OCI-LY7 (cell line): ENCODE measurements at regions of chr1 and their contacts with region 1.

Region 1: DNA sequence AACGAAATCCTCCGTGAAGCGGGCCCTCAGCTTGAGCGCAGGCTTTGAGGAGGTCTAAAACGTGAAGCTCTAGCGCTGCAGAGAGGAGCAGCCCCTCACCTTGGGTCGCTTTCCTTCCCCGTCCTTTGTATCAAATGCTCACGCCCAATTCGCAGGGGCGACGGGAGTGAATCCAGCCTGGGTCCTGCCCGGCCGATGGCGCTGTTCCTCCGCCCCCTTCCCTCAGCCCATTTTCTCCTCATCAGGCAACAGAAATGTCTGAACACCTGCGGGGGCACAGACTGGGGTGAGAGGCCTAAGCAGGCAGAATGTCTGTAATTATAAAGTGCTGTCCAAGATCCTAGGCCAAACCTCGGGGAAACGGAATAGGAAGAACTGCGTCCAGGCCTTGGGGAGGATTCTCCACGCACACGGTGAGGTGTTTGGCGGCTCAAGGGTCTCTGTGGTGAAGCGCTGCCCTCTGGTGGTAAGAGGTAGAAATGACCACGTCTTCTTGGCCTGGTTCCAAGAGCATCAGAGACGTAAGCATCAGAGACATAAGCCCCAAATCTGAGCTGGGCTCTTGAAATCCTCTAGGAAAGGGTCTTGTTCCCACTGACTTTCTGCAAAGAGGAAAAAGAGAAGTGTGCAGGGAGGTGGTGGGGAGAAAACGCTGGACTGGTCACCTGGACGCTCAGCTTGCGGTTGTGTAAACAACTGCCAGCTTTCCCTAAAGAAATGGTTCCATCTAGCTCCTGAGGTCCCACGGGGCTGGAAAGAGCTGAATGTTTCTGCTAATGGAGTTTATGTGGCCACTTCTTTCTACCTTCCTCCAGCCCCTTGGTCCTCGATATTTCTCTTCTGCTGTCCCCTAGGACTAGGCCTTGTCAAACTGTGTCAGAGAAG is 92.1 kb upstream of the CD53 start:
- DNase-seq: peak; percentile 81
- H3K4me3 ChIP-seq: no peak overlapping the region
- H3K27ac ChIP-seq: no peak overlapping the region
- H3K4me1 ChIP-seq: peaks cover 4% of the 10 kb centered on the region
- CTCF ChIP-seq: peak; percentile 92

Region 2: DNA sequence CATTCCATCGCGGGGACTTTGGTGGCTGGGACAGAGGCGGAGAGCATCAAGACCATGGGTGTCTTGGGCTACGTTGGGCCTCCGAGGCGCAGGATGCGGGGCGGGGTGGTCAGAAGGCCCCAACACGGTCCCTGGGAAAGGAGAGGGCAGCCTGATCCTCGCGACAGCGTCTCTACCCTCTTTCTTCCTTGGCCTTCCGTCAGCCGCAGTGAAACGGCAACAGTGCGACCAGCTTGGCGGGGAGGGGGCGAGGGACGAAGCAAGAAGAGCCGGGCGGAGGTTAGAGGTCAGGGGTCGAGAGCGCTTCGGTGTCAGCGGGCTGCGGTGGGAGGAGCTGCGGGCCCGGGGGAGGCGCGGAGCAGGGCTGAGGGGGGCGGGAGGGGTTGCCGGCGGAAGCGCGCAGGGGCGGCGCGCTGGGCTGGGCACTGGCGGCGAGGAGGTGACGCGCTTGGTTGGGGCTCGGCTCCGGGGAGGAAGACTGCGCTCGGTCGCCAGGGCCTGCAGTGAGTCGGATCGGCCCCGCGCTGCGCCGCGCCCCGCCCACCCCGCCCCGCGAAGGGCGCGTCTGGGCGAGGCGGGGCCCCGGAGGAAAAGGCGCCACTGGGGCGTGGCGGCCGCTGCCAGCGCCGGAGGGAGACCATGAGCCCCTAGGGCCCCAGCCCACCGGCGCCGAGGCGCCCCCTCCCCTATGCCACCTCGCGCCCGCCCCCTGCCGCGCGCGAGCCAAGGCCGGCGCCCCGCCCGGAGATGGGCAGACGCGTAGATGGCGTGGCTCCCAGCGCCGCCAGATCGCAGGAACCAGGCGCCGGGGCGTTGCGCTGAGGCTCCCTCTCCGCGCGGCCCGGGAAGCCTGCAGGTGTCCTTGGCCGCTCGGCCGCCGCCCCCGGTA is 570.9 kb before region 1 on chr1 and contains the start of gene KCNC4:
- CTCF ChIA-PET with region 1: interaction called, 3 read pairs
- POLR2A ChIA-PET with region 1: no interaction called
- intact Hi-C with region 1: loop called (anchors 10 kb)
- DNase-seq: peak; percentile 89
- H3K4me3 ChIP-seq: peak within 1 kb of the TSS; percentile 71
- H3K27ac ChIP-seq: peak within 1 kb of the TSS; percentile 33
- H3K4me1 ChIP-seq: peaks cover 31% of the 10 kb centered on the region
- CTCF ChIP-seq: no peak
- total RNA-seq, gene KCNC4: 3.9 and 5.6 TPM in 2 replicates

Region 3: DNA sequence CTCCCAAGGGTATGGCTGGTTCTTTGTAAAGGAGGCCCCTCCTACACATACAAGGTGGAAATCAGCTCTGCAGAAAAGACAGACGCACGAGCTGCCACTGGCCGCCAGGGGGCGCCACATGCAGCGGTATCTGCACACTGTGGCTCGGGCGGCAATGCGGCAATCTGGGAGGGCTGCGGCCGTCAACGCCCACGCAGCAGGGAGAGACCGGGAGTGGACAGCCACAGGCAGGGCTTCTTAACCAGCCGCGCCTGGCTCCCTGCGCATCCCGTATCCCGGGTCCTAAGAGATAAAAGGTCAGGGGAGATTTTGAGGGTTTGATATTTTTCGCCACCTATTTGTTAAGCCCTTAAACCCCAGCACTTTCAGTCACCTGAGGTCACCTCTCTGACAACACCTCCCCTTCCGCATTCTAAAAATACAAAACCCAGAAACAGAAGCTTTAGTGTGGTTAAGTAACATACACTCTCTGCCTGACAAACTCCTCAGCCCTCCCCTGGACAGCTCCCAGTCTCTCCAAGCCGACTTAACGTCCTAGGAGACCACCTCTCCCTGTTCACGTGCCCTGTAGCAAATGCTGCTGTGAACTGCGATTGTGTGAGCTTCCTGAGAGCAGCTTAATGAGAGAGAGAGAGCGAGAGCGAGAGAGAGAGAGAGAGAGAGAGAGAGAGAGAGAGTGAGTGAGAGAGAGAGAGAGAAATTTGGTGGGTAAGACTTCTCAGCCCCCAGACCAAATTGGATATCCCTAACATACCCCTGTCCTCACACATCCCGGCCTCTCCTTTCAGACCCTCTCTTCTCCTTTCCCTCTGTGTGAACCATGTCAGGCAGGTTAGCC is 161.2 kb before region 1 on chr1:
- CTCF ChIA-PET with region 1: interaction called, 7 read pairs
- POLR2A ChIA-PET with region 1: no interaction called
- intact Hi-C with region 1: loop called (anchors 1 kb)
- DNase-seq: peak; percentile 90
- H3K4me3 ChIP-seq: peak overlapping the region; percentile 64
- H3K27ac ChIP-seq: no peak overlapping the region
- H3K4me1 ChIP-seq: peaks cover 29% of the 10 kb centered on the region
- CTCF ChIP-seq: peak; percentile 98

Region 4: GRCh38 chr1:110674337-110675059 is 106.3 kb before region 1 on chr1 and contains the start of gene KCNA3:
- CTCF ChIA-PET with region 1: no interaction called
- POLR2A ChIA-PET with region 1: interaction called, 4 read pairs
- intact Hi-C with region 1: loop called (anchors 5 kb)
- DNase-seq: peak; percentile 79
- H3K4me3 ChIP-seq: peak within 1 kb of the TSS; percentile 84
- H3K27ac ChIP-seq: peak within 1 kb of the TSS; percentile 97
- H3K4me1 ChIP-seq: peaks cover 29% of the 10 kb centered on the region
- CTCF ChIP-seq: peak; percentile 69
- total RNA-seq, gene KCNA3: 46.2 and 58.0 TPM in 2 replicates

Region 5: DNA sequence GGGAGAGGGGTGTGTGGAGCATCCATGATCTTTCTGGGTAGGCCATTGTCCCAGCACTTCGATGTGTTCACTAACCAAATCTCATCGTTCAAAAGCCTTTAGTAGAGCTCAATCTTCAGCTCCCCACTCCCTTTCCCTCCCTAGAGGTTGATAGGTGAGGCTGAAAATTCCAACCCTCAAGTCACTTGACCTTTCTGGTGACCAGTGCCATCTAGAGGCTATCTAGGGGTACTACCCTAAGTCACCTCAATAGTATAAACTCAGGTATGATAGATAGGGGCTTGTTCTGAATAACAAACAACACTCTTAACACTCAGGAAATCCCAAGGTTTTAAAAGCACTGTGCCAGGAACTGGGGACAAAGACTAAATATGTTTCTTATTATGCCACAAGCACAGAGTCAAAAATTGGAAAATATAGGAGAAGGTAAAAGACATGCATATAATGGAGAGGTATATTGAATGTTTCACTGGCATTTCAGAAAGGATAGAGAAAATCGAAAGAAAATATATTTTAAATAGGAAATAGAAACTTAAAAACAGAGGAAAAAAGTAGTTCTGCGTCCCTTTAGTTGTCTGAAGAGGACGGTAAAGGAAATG is 49.2 kb after region 1 on chr1:
- CTCF ChIA-PET with region 1: interaction called, 6 read pairs
- POLR2A ChIA-PET with region 1: interaction called, 17 read pairs
- intact Hi-C with region 1: loop called (anchors 1 kb)
- DNase-seq: peak; percentile 80
- H3K4me3 ChIP-seq: no peak overlapping the region
- H3K27ac ChIP-seq: no peak overlapping the region
- H3K4me1 ChIP-seq: peaks cover 4% of the 10 kb centered on the region
- CTCF ChIP-seq: peak; percentile 93

Region 6: DNA sequence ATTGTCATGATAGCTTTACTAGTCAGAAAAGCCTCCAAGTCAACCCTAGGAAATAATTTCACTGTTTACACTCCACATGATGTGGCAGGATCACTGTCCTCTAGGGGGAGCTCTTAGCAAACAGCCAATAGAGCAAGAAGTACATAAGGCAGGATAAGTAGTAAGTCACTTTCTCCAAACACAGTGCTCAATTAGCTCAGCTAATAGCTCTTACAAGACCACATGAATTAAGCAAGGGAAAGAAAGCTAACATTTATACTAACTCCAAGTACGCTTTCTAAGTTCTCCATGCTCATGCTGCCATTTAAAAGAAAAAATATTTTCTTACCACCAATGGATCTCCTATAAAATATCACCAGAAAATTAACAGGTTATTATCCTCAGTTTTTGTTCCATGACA is 249.7 kb after region 1 on chr1:
- CTCF ChIA-PET with region 1: no interaction called
- POLR2A ChIA-PET with region 1: no interaction called
- intact Hi-C with region 1: loop called (anchors 1 kb)
- DNase-seq: peak; percentile 83
- H3K4me3 ChIP-seq: no peak overlapping the region
- H3K27ac ChIP-seq: no peak overlapping the region
- H3K4me1 ChIP-seq: no peaks in the 10 kb centered on the region
- CTCF ChIP-seq: peak; percentile 98